ENCODE measurements at regions of chr1 and their contacts with region 1.

Region 1: GRCh38 chr1:28602536-28603439 is 10.7 kb downstream of the RAB42 start:
- DNase-seq: peak in 1 of 3 donors; percentile 62
- ATAC-seq: peak; percentile 79 to 92 (median 83)
- H3K4me3 ChIP-seq: no peak overlapping the region
- H3K27ac ChIP-seq: no peak overlapping the region
- H3K4me1 ChIP-seq: no peaks in the 10 kb centered on the region
- H3K27me3 ChIP-seq: no peaks in the 10 kb centered on the region
- CTCF ChIP-seq: peak; percentile 61 to 70 (median 66)
- POLR2A ChIP-seq: no peak

Region 2: DNA sequence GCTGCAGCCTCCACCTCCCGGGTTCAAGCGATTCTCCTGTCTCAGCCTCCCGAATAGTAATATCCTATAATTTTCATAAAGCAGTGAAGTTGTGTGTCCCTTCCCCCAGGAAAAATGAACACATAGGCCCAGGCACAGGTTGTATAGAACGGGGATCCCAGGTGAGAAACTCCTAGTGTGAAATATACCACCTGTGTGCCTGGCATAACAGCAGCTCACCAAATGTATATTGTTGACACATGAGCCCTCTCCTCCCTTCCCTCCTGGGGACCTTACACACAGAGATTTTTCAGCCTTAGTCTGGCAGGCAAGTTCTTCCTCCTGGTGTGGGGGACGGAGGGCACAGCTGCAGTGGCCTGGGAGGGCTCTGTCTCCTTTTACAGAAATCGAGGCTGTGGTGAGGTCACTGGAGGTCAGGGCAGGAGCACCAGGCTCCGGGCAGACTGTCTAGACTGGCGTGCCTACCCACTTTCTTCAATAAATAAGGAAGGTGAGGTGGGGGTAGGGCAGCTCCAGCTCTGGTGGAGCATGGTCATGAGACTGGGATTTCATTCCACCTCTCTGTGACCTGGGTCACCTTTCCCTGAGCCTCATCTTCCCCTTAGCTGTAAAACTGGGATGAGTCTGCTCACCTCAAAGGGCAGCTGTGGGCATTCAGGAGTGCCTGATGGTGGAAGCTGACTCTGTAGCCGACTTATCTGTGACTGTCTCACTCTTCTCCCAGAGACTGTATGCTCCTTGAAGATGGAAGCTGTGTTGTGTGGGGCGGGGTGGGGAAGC is 82.7 kb before region 1 on chr1:
- intact Hi-C with region 1: loop called in 1 of 2 experiments (anchors 5 kb)
- DNase-seq: no peak
- ATAC-seq: no peak
- H3K4me3 ChIP-seq: no peak overlapping the region
- H3K27ac ChIP-seq: no peak overlapping the region
- H3K4me1 ChIP-seq: peaks cover 0 to 5% (median 2%) of the 10 kb centered on the region in 4 donors
- H3K27me3 ChIP-seq: no peaks in the 10 kb centered on the region
- CTCF ChIP-seq: no peak
- POLR2A ChIP-seq: no peak

Measured in right lobe of liver (tissue), 6 donors.